ENCODE measurements at regions of chr9 and their contacts with region 1.

Region 1: DNA sequence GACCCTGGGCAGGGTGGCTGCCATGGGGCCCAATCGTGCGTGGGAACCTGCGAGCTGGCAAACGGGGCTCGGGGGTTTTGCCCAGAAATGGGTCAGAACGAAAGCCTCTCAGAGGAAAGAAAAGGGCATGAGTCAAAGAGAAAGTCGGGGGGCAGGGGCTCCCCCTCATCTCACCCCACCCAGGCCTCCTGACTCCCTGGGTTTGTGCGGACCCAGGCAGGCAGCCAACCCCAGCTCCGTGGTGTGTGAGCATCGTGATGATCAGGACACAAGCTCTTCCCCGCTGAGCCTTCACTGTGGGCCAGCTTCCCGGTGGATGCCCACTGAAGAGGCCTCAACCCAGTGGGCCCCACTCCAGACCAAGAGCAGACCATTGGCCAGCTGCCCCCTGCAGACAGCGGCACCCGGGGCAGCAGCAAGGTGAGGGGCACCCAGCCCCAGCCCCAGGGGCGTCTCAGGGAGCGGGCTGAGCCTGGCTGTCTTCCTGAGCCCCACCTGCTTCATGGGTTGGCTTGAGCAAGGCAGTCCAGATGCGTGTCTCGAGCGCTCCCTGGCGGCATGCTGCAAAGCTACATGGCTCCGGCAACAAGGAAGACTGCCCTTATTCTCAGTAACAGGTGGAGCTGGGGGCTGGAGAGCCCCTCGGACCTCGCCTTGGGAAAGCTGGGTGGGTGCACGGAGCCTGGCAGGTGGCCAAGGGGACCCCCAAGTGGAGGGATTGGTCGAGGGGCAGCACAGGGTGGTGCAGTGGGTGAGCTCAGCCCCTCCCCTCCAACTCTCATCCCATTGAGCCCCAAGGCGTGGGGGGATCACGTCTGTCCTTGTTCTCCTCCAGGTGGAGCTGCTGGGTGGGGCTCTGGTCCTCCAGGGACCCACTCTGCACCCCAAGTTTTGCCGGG is 3.2 kb upstream of the FUT7 start:
- DNase-seq: peak; percentile 93
- H3K4me3 ChIP-seq: peak overlapping the region in 1 of 2 experiments; percentile 20; a peak in 1 of 4 replicates
- H3K27ac ChIP-seq: peak overlapping the region in 1 of 2 experiments; percentile 39; a peak in 1 of 4 replicates
- H3K4me1 ChIP-seq: peaks cover 0 to 21% of the 10 kb centered on the region in 2 experiments; a peak in 1 of 4 replicates
- H3K27me3 ChIP-seq: no peaks in the 10 kb centered on the region
- CTCF ChIP-seq: peak; percentile 81
- EP300 ChIP-seq: no peak
- RAD21 ChIP-seq: peak; percentile 85

Region 2: GRCh38 chr9:136944519-136945279 is 90.4 kb before region 1 on chr9 and contains the starts of genes C8G and FBXW5:
- CTCF ChIA-PET with region 1: interaction called, 350 read pairs
- POLR2A ChIA-PET with region 1: interaction called, 13 read pairs
- DNase-seq: peak; percentile 100
- H3K4me3 ChIP-seq: peak within 1 kb of the TSS; percentile 77 to 94
- H3K27ac ChIP-seq: peak within 1 kb of the TSS; percentile 22 to 86; a peak in 3 of 4 replicates
- H3K4me1 ChIP-seq: peaks cover 0 to 19% of the 10 kb centered on the region in 2 experiments; a peak in 1 of 4 replicates
- H3K27me3 ChIP-seq: no peaks in the 10 kb centered on the region
- CTCF ChIP-seq: peak; percentile 85
- EP300 ChIP-seq: no peak
- RAD21 ChIP-seq: peak; percentile 39; the same call in 1 of the 2 replicates
- polyA plus RNA-seq, gene C8G: 0.28 and 0.49 TPM in 2 replicates
- polyA plus RNA-seq, gene FBXW5: 78.9 and 85.5 TPM in 2 replicates

Region 3: GRCh38 chr9:136991993-136992818 is 42.9 kb before region 1 on chr9 and contains the start of gene PAXX:
- CTCF ChIA-PET with region 1: interaction called, 68 read pairs
- POLR2A ChIA-PET with region 1: no interaction called
- DNase-seq: peak; percentile 100
- H3K4me3 ChIP-seq: peak within 1 kb of the TSS; percentile 80 to 85
- H3K27ac ChIP-seq: peak within 1 kb of the TSS in 1 of 2 experiments; percentile 56; a peak in 2 of 4 replicates
- H3K4me1 ChIP-seq: peaks cover 9 to 24% of the 10 kb centered on the region in 2 experiments; a peak in 3 of 4 replicates
- H3K27me3 ChIP-seq: no peaks in the 10 kb centered on the region
- CTCF ChIP-seq: no peak
- EP300 ChIP-seq: no peak
- RAD21 ChIP-seq: no peak
- polyA plus RNA-seq, gene PAXX: 37.8 and 52.9 TPM in 2 replicates

Region 4: GRCh38 chr9:137021979-137022619 is 13.0 kb before region 1 on chr9:
- CTCF ChIA-PET with region 1: interaction called, 53 read pairs
- POLR2A ChIA-PET with region 1: no interaction called
- DNase-seq: peak; percentile 90
- H3K4me3 ChIP-seq: no peak overlapping the region
- H3K27ac ChIP-seq: no peak overlapping the region
- H3K4me1 ChIP-seq: peaks cover 0 to 23% of the 10 kb centered on the region in 2 experiments; a peak in 1 of 4 replicates
- H3K27me3 ChIP-seq: no peaks in the 10 kb centered on the region
- CTCF ChIP-seq: no peak
- EP300 ChIP-seq: no peak
- RAD21 ChIP-seq: no peak

Region 5: DNA sequence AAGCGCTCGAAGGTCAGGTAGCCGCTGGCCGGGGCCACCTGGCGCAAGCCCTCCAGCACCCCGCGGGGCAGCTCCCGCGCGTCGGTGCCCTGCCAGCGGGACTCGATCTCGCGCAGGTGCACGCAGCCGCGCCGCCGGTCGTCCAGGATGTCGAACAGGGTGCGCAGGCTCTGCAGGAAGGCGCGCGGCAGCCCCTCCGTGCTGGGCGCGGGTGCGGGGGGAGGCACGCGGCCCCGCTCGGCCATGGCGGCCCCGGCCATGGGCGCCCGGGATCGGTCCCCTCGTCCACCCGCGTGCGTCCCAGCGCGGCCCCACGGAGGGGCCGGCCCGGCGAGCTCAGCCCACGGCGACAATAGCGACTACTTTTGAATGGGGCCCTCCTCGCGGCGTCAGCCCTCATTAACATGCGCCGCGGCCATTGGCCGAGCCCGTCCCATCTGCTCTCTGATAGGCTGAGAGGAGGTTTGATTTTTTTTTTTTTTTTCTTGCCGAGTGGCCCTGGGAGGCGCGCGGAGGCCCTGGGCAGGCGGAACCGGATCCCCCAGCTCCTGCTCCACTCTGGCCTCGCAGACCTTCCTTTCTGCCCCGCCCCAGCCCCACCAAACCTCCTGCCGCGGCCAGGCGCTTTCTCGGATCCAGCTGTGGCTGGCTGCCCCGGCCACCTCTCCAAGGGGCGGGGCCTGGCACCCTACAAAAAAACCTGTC is 35.2 kb after region 1 on chr9 and contains the start of gene SAPCD2:
- CTCF ChIA-PET with region 1: interaction called, 156 read pairs
- POLR2A ChIA-PET with region 1: interaction called, 3 read pairs
- DNase-seq: peak; percentile 95
- H3K4me3 ChIP-seq: peak within 1 kb of the TSS; percentile 53 to 57
- H3K27ac ChIP-seq: peak within 1 kb of the TSS in 1 of 2 experiments; percentile 80; a peak in 2 of 4 replicates
- H3K4me1 ChIP-seq: peaks cover 0 to 29% of the 10 kb centered on the region in 2 experiments; a peak in 1 of 4 replicates
- H3K27me3 ChIP-seq: no peaks in the 10 kb centered on the region
- CTCF ChIP-seq: no peak
- EP300 ChIP-seq: no peak
- RAD21 ChIP-seq: no peak
- polyA plus RNA-seq, gene SAPCD2: 4.6 and 6.0 TPM in 2 replicates

Region 6: GRCh38 chr9:137097761-137098462 is 62.8 kb after region 1 on chr9:
- CTCF ChIA-PET with region 1: no interaction called
- POLR2A ChIA-PET with region 1: no interaction called
- DNase-seq: no peak
- H3K4me3 ChIP-seq: no peak overlapping the region
- H3K27ac ChIP-seq: no peak overlapping the region
- H3K4me1 ChIP-seq: no peaks in the 10 kb centered on the region
- H3K27me3 ChIP-seq: no peaks in the 10 kb centered on the region
- CTCF ChIP-seq: no peak
- EP300 ChIP-seq: no peak
- RAD21 ChIP-seq: no peak

Region 7: GRCh38 chr9:137138722-137139467 is 103.8 kb after region 1 on chr9 and contains the start of gene GRIN1:
- CTCF ChIA-PET with region 1: no interaction called
- POLR2A ChIA-PET with region 1: no interaction called
- DNase-seq: peak; percentile 70
- H3K4me3 ChIP-seq: peak within 1 kb of the TSS in 1 of 2 experiments; percentile 35; a peak in 2 of 4 replicates
- H3K27ac ChIP-seq: peak within 1 kb of the TSS in 1 of 2 experiments; percentile 51; a peak in 1 of 4 replicates
- H3K4me1 ChIP-seq: peaks cover 0 to 8% of the 10 kb centered on the region in 2 experiments; a peak in 1 of 4 replicates
- H3K27me3 ChIP-seq: peaks cover 14% of the 10 kb centered on the region
- CTCF ChIP-seq: no peak
- EP300 ChIP-seq: no peak
- RAD21 ChIP-seq: no peak
- polyA plus RNA-seq, gene GRIN1: 0.03 TPM in 1 of 2 replicates, not detected in the other